Mammary epithelial cell (primary cell): ENCODE measurements at regions of chr4 and their contacts with region 1.

Region 1: GRCh38 chr4:132227151-132227856 is 921.8 kb upstream of the PCDH10 start:
- DNase-seq: no peak
- H3K4me3 ChIP-seq: no peak overlapping the region
- H3K27ac ChIP-seq: no peak overlapping the region
- H3K4me1 ChIP-seq: no peaks in the 10 kb centered on the region
- H3K27me3 ChIP-seq: no peaks in the 10 kb centered on the region
- CTCF ChIP-seq: no peak

Region 2: DNA sequence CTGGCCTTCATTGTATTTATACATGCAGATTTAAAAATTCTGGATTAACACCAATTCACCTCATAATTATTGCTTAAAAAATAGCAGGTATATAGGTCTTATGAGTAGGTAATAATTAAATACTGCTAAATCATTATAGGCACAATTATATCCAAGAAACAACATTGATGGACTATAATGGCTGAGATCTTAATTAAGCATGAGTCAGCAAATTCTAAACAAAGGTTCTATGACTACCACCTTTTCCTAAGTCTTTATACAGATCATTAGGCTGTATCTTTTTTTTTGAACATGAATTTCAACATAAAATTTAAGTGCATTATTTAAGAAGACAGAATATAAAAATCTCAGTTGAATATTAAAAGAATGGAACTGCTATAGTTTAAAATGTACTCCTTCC is 756.9 kb before region 1 on chr4:
- CTCF ChIA-PET with region 1: no interaction called
- dilution Hi-C with region 1: no loop called
- in situ Hi-C with region 1: no loop called
- intact Hi-C with region 1: loop called (anchors 5 kb)
- DNase-seq: no peak
- H3K4me3 ChIP-seq: no peak overlapping the region
- H3K27ac ChIP-seq: no peak overlapping the region
- H3K4me1 ChIP-seq: no peaks in the 10 kb centered on the region
- H3K27me3 ChIP-seq: no peaks in the 10 kb centered on the region
- CTCF ChIP-seq: no peak

Region 3: GRCh38 chr4:132169660-132170059 is 57.6 kb before region 1 on chr4:
- CTCF ChIA-PET with region 1: no interaction called
- dilution Hi-C with region 1: no loop called
- in situ Hi-C with region 1: no loop called
- intact Hi-C with region 1: no loop called
- DNase-seq: no peak
- H3K4me3 ChIP-seq: no peak overlapping the region
- H3K27ac ChIP-seq: no peak overlapping the region
- H3K4me1 ChIP-seq: no peaks in the 10 kb centered on the region
- H3K27me3 ChIP-seq: no peaks in the 10 kb centered on the region
- CTCF ChIP-seq: no peak